Gastrocnemius medialis (tissue), 4 donors: ENCODE measurements at regions of chr1 and their contacts with region 1.

Region 1: GRCh38 chr1:44594871-44595746 is 79.2 kb downstream of the TMEM53 start:
- DNase-seq: peak; percentile 54
- ATAC-seq: peak; percentile 55 to 77
- H3K4me3 ChIP-seq: no peak overlapping the region
- H3K27ac ChIP-seq: no peak overlapping the region
- H3K4me1 ChIP-seq: no peaks in the 10 kb centered on the region
- H3K27me3 ChIP-seq: peaks cover 0 to 10% (median 0%) of the 10 kb centered on the region in 3 donors
- CTCF ChIP-seq: peak; percentile 83 to 97 (median 93)
- POLR2A ChIP-seq: no peak

Region 2: DNA sequence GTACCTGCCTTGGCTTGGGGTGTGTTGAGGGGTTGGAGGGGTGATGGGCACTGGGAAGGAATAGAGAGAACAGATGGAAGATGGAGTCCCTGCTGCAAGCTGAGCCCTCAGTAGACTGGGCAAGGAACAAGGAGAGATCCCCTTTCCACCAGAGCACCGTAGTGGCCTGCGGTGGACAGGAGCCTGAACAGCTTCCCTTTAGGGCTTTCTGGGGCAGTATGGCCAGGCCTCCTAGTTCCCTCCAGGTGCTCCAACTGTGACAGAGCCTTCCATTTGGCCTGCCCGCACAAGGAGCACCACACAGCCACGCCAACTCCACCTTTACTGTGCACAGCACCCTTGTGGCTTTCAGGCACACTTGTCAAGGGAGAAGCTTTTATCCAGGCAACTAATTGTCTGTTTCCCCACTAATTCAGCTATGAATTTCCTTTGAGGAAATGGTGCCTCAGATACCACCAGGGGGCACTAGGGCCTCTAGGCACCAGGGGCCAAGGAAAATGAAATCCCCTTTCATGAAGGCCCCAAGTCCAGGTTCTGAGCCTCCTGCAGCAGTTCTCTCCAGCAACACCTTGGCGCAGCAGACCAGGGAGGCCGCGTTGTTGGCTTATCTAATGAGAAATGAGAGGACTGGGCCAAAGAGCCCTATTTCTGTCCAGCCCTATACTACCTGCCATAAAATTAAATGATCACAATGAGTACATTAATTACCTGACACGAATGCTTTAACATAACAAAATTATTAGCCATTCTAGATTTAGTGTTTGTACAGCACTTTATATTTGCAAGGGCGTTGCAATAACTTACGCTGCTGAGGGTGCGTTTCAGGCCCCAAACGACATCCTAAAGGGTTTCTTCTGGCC is 217.0 kb before region 1 on chr1:
- in situ Hi-C with region 1: loop called (anchors 5 to 25 kb)
- intact Hi-C with region 1: loop called (anchors 5 kb)
- DNase-seq: no peak
- ATAC-seq: no peak
- H3K4me3 ChIP-seq: no peak overlapping the region
- H3K27ac ChIP-seq: no peak overlapping the region
- H3K4me1 ChIP-seq: no peaks in the 10 kb centered on the region
- H3K27me3 ChIP-seq: no peaks in the 10 kb centered on the region
- CTCF ChIP-seq: peak; percentile 9 to 58 (median 54)
- POLR2A ChIP-seq: no peak